Activated B cell treated with CpG ODN at 0.5 μM for 24 hours (primary cell): ENCODE measurements at regions of chr7 and their contacts with region 1.

Region 1: GRCh38 chr7:43834463-43835251 is 34.7 kb downstream of the MRPS24 start:
- DNase-seq: no peak
- ATAC-seq: peak; percentile 55
- H3K4me3 Mint-ChIP-seq: peak overlapping the region; percentile 88
- H3K27ac Mint-ChIP-seq: peak overlapping the region; percentile 88
- H3K4me1 Mint-ChIP-seq: peaks cover 24% of the 10 kb centered on the region
- H3K27me3 Mint-ChIP-seq: peaks cover 3% of the 10 kb centered on the region
- CTCF ChIP-seq: no peak

Region 2: DNA sequence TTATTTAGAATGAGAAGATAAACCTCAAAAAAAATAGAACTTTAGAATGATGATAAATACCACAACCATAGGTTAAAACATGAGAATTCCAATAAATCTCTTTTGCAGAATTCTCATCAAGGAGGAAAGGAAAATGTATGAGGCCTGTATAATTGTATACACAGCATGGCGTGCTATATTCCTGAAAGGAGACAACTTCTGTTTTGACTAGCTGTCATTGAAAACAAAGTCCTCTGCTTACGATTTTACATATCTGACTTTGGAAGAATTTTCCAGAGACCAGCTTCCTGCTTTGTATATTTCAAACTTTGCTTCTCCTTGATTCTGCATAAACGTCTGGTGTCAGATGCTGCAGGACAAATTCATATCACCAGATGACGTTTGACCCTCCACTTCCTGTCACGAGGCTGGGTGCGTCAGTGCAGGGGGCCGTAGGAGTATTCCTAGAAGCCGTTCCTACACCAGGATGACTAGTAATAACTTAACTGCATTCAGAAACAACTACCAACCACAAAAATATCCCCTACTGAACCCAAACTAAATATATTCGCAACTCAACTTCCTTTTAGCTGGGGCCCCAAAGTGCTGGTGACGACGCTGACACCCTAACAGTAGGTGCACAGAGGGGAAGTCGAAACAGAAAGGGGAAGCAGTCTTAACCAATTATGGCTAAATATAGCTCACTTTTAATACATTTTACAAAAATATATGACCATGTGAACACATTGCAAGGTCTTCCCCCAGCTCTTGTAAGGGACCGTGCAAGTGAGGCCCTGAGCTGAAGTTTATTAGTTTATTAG is 1953.1 kb before region 1 on chr7:
- CTCF ChIA-PET with region 1: no interaction called
- POLR2A ChIA-PET with region 1: no interaction called
- intact Hi-C with region 1: loop called (anchors 10 kb)
- DNase-seq: peak; percentile 75
- ATAC-seq: peak; percentile 88
- H3K4me3 Mint-ChIP-seq: peak overlapping the region; percentile 80
- H3K27ac Mint-ChIP-seq: peak overlapping the region; percentile 91
- H3K4me1 Mint-ChIP-seq: peaks cover 76% of the 10 kb centered on the region
- H3K27me3 Mint-ChIP-seq: no peaks in the 10 kb centered on the region
- CTCF ChIP-seq: no peak

Region 3: DNA sequence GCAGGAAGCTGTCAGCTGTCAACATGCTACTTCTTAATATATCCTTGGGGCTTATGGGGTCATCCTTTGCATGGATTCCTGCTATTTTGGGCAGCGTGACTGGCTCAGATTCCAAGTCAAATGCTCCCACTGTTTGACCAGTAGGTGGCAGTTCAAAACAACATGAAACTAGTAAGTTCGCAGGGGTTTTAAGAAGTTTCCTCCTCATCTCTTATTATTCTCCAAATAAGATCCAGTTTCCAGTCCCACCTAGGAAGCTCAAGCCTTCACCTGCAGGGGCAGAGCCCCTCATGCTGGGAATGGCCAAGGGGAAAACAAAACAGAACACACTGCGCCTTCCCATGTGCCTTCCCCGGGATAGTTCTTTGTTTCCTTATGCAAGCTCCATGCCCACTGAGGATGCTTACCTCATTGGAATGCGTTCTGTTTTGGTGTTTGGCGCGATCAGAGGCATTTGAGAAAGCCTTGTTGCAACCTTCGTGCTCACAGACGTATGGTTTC is 1857.5 kb before region 1 on chr7:
- CTCF ChIA-PET with region 1: interaction called, 6 read pairs
- POLR2A ChIA-PET with region 1: no interaction called
- intact Hi-C with region 1: loop called (anchors 1 kb)
- DNase-seq: no peak
- ATAC-seq: no peak
- H3K4me3 Mint-ChIP-seq: no peak overlapping the region
- H3K27ac Mint-ChIP-seq: no peak overlapping the region
- H3K4me1 Mint-ChIP-seq: no peaks in the 10 kb centered on the region
- H3K27me3 Mint-ChIP-seq: peaks cover 9% of the 10 kb centered on the region
- CTCF ChIP-seq: no peak

Region 4: DNA sequence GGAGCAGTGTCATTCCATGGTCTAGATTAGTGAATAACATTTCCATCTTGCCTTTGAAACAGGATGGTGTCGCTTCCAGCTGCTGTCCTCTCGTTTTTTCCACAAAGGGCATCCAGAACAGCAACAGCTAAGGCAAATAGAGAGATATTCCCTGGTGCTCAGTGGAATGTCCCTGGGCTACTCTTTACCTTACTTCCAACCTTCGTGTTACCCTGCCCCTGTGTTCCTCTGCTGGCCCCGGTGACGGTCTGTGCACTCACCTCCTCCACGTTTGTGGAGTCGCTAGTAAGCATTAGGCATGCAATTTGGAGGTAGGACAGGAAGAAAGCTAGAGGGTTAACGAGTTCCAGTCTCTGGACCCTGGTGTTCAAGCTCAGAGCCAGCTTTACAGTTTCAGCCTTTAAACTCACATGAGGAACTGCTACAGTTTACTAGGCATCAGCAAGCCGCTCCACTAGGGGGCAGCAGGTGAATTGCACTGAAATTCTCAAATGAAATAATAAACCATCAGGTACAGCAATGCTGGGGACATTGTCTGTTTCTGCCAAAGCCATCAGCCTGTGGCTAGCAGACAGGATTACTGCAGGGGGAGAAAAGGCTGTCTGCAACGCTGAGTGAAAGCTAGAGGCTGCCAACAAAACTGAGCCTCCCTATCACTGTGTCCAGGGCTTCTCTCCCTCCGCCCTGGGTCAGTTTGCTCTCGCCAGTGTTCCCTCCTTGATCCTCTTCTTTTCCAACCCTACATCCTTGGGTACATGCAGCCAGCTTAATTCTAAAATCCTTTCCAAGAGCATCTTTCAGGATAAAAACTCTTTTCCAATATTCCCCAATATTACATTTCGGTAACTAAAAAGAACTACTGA is 893.4 kb before region 1 on chr7:
- CTCF ChIA-PET with region 1: interaction called, 19 read pairs
- POLR2A ChIA-PET with region 1: no interaction called
- intact Hi-C with region 1: loop called (anchors 1 kb)
- DNase-seq: peak; percentile 51
- ATAC-seq: peak; percentile 57
- H3K4me3 Mint-ChIP-seq: no peak overlapping the region
- H3K27ac Mint-ChIP-seq: no peak overlapping the region
- H3K4me1 Mint-ChIP-seq: peaks cover 6% of the 10 kb centered on the region
- H3K27me3 Mint-ChIP-seq: no peaks in the 10 kb centered on the region
- CTCF ChIP-seq: peak; percentile 80

Region 5: DNA sequence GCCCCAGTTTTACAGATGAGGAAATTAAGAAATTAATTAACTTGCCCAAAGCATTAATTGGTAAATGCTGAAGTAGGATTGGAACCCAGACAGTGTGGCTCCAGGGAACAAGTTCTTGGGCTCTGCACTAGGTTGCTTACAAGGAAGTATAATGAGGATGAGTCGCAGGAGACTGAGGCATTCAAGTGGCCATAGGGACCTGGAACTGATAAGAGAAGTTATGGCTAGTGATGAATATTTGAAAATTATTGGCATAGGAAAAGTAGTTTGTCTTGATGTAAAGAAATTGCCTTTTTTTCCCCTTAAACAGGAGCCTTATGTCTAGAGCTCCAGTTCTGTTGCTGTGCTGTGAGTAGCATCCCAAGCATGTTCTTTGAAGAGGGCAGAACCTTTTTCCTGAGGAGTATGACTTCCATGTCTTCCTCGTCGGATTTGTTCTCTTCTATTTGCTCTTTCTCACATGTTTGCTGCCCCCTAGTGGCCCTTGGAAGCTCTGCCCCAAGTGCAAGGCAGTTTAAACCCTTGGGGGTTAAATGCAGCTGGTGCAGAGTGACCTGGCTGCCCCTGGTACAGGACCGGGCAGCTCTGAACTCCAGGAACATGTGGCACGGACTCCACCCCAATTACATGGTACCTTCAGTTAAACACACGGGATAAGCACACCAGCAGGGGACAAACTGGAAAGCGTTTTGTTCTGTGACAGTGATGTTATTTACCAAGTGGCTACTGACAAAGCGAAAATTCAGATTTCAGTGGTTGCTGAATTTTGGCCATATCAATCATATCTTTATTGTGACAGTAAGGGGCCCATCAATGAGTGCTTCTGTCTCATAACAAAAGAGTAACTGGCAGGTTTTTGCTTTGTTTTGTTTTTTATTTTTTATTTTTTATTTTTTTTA is 573.4 kb before region 1 on chr7:
- CTCF ChIA-PET with region 1: interaction called, 4 read pairs
- POLR2A ChIA-PET with region 1: no interaction called
- intact Hi-C with region 1: loop called (anchors 1 kb)
- DNase-seq: peak; percentile 47
- ATAC-seq: peak; percentile 58
- H3K4me3 Mint-ChIP-seq: no peak overlapping the region
- H3K27ac Mint-ChIP-seq: no peak overlapping the region
- H3K4me1 Mint-ChIP-seq: no peaks in the 10 kb centered on the region
- H3K27me3 Mint-ChIP-seq: peaks cover 5% of the 10 kb centered on the region
- CTCF ChIP-seq: no peak

Region 6: DNA sequence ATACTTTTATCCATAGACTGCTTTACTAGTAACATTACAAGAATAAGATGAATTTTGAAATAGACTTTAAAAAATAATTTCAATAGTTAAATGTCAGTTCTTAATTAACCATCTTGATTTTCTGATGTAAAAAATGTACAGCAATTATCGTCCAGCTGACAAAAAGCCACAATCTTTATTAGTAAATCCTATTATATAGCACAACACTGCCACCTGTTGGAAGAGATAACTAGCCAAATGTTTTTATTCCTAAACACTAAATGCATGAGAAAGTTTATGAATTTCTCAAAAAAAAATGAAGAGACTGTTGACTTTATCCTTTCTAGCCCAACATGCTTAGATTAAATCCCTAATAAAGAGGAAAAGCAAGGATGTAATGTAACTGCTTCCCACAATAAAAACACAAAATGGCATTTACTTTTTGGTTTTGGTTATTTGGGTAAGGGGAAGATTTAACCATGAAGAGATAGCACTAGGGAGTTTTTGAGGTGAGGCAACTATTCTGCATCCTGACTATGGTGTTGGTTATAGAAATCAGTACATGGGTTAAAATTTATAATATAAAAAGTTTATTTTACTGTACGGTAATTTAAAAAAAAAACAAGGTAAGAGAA is 113.4 kb before region 1 on chr7:
- CTCF ChIA-PET with region 1: interaction called, 19 read pairs
- POLR2A ChIA-PET with region 1: no interaction called
- intact Hi-C with region 1: loop called (anchors 1 kb)
- DNase-seq: no peak
- ATAC-seq: peak; percentile 25
- H3K4me3 Mint-ChIP-seq: no peak overlapping the region
- H3K27ac Mint-ChIP-seq: no peak overlapping the region
- H3K4me1 Mint-ChIP-seq: peaks cover 16% of the 10 kb centered on the region
- H3K27me3 Mint-ChIP-seq: no peaks in the 10 kb centered on the region
- CTCF ChIP-seq: peak; percentile 61

Region 7: GRCh38 chr7:43764039-43764761 is 70.5 kb before region 1 on chr7:
- CTCF ChIA-PET with region 1: no interaction called
- POLR2A ChIA-PET with region 1: no interaction called
- intact Hi-C with region 1: loop called (anchors 2 kb)
- DNase-seq: no peak
- ATAC-seq: peak; percentile 76
- H3K4me3 Mint-ChIP-seq: peak overlapping the region; percentile 70
- H3K27ac Mint-ChIP-seq: no peak overlapping the region
- H3K4me1 Mint-ChIP-seq: peaks cover 23% of the 10 kb centered on the region
- H3K27me3 Mint-ChIP-seq: no peaks in the 10 kb centered on the region
- CTCF ChIP-seq: no peak

Region 8: GRCh38 chr7:43779032-43779812 is 55.4 kb before region 1 on chr7:
- CTCF ChIA-PET with region 1: no interaction called
- POLR2A ChIA-PET with region 1: no interaction called
- intact Hi-C with region 1: no loop called
- DNase-seq: no peak
- ATAC-seq: no peak
- H3K4me3 Mint-ChIP-seq: no peak overlapping the region
- H3K27ac Mint-ChIP-seq: no peak overlapping the region
- H3K4me1 Mint-ChIP-seq: no peaks in the 10 kb centered on the region
- H3K27me3 Mint-ChIP-seq: no peaks in the 10 kb centered on the region
- CTCF ChIP-seq: no peak

Region 9: GRCh38 chr7:43850348-43851116 is 15.9 kb after region 1 on chr7:
- CTCF ChIA-PET with region 1: no interaction called
- POLR2A ChIA-PET with region 1: no interaction called
- intact Hi-C with region 1: no loop called
- DNase-seq: no peak
- ATAC-seq: no peak
- H3K4me3 Mint-ChIP-seq: no peak overlapping the region
- H3K27ac Mint-ChIP-seq: no peak overlapping the region
- H3K4me1 Mint-ChIP-seq: no peaks in the 10 kb centered on the region
- H3K27me3 Mint-ChIP-seq: no peaks in the 10 kb centered on the region
- CTCF ChIP-seq: no peak

Region 10: DNA sequence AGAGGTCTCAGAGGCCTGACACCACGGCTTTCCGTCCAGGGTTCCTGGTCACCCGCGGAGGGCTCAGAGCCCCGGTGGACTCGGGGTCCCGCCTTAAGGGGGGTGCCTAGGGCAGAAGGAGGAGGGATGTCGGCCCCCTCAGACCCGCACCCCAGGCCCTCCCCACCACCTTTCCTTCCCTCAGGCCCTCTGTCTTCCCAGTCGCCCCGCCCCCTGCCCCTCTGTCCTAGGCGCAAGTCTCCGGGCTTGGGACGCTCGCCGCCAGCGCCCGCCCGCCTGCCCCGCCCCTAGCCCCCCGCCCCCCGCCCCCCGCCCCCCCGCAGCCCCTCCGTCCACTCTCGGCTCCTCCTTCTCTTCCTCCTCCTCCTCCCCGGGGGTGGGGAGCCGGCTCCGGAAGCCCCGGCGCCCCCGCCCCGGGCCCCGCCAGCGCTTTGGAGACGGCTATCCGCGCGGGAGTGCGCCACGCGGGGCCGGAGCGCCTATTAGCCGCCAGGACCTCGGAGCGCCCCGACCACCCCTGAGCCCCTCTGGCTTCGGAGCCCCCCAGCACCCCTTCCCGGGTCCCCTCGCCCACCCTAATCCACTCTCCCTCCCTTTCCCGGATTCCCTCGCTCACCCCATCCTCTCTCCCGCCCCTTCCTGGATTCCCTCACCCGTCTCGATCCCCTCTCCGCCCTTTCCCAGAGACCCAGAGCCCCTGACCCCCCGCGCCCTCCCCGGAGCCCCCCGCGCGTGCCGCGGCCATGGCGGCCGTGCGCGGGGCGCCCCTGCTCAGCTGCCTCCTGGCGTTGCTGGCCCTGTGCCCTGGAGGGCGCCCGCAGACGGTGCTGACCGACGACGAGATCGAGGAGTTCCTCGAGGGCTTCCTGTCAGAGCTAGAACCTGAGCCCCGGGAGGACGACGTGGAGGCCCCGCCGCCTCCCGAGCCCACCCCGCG is 269.5 kb after region 1 on chr7 and contains the start of gene AEBP1:
- CTCF ChIA-PET with region 1: no interaction called
- POLR2A ChIA-PET with region 1: no interaction called
- intact Hi-C with region 1: no loop called
- DNase-seq: no peak
- ATAC-seq: peak; percentile 66
- H3K4me3 Mint-ChIP-seq: peak within 1 kb of the TSS; percentile 81
- H3K27ac Mint-ChIP-seq: peak within 1 kb of the TSS; percentile 72
- H3K4me1 Mint-ChIP-seq: peaks cover 57% of the 10 kb centered on the region
- H3K27me3 Mint-ChIP-seq: peaks cover 2% of the 10 kb centered on the region
- CTCF ChIP-seq: no peak
- total RNA-seq, gene AEBP1: 17.4 and 21.7 TPM in 2 replicates